B cell (primary cell): ENCODE measurements at regions of chr5 and their contacts with region 1.

Region 1: DNA sequence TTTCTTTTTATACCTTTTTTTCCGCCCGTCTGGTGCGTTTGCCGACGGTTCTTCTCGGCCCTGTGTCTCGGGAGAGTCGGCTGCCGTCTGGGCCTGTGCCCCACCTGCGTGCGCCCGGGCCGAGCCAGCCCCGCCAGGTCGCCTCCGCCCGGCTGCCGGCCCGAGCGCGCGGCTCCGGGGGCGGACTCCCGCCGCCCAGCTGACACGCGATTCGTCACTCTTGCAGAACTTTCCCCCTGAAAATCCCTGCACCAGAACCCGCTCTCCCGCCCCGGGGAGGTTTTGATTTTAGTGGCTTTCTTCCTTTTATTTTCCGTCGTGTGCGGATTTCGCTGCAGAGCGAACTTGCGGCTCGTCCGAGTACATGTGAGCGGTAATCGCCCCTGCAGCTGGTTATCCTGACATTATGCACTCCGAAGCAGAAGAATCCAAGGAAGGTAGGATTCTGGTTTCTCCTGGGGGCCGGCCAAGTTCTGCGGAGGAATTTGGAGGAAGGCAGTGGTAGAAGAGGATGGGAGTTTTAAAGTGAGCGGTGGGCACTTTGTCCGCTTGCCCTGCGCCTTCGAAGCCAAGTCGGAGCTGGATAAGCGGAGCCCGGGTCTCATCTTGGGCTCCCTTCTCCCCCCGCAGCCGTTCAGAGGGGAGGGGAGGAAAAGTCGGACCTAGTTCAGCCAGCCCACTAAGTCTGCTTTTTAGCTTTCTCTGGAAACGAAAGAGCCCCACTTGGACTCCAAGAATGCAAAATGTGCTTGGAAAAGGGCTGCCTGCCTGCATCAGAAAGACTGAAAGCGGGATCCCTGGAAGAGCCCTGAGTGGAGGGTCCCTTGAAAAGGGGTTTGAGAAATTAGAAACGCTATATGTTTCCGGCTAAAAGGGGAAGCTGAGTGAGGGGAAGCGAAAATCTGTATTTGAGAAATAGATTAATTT is at the start of gene TNFAIP8:
- DNase-seq: peak; percentile 74
- ATAC-seq: peak; percentile 66
- H3K4me3 ChIP-seq: peak within 1 kb of the TSS; percentile 76 to 93 (median 89)
- H3K4me3 Mint-ChIP-seq: peak within 1 kb of the TSS; percentile 92
- H3K27ac ChIP-seq: peak within 1 kb of the TSS; percentile 78 to 91
- H3K27ac Mint-ChIP-seq: peak within 1 kb of the TSS; percentile 93
- H3K4me1 ChIP-seq: peaks cover 73 to 74% of the 10 kb centered on the region in 2 donors
- H3K4me1 Mint-ChIP-seq: peaks cover 87% of the 10 kb centered on the region
- H3K27me3 ChIP-seq: no peaks in the 10 kb centered on the region
- H3K27me3 Mint-ChIP-seq: no peaks in the 10 kb centered on the region
- CTCF ChIP-seq: no peak
- total RNA-seq, gene TNFAIP8: 105 and 109 TPM in 2 replicates

Region 2: GRCh38 chr5:119200795-119201194 is 155.2 kb before region 1 on chr5:
- CTCF ChIA-PET with region 1: no interaction called
- POLR2A ChIA-PET with region 1: no interaction called
- intact Hi-C with region 1: no loop called
- DNase-seq: peak; percentile 12
- ATAC-seq: no peak
- H3K4me3 ChIP-seq: no peak overlapping the region
- H3K4me3 Mint-ChIP-seq: peak overlapping the region; percentile 42
- H3K27ac ChIP-seq: peak overlapping the region in 1 of 2 donors; percentile 13
- H3K27ac Mint-ChIP-seq: peak overlapping the region; percentile 86
- H3K4me1 ChIP-seq: peaks cover 12 to 16% of the 10 kb centered on the region in 2 donors
- H3K4me1 Mint-ChIP-seq: peaks cover 28% of the 10 kb centered on the region
- H3K27me3 ChIP-seq: no peaks in the 10 kb centered on the region
- H3K27me3 Mint-ChIP-seq: no peaks in the 10 kb centered on the region
- CTCF ChIP-seq: no peak

Region 3: DNA sequence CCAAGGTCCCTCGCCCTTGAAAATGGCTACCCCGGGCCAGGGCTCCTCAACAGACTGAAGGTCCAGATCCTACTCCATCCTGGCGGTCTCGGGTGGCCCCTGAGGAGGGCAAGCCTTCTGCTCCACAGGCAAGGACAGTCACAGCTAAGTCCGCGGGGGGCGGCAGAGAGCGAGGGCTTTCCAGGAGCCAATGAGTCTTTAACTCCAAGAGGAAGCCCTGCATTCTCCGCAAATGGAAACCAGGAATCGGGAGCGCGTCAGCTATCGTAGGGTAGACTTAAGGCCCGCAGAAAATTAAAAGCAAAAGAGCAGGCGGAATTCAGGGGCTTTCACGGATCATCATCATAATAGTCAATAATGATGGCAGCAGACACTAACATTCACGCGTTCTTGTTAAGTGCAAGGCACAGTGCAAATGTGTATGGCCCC is 88.0 kb before region 1 on chr5:
- CTCF ChIA-PET with region 1: interaction called, 7 read pairs
- POLR2A ChIA-PET with region 1: interaction called, 14 read pairs
- intact Hi-C with region 1: loop called (anchors 2 kb)
- DNase-seq: peak; percentile 94
- ATAC-seq: peak; percentile 63
- H3K4me3 ChIP-seq: peak overlapping the region; percentile 79 to 99 (median 96)
- H3K4me3 Mint-ChIP-seq: peak overlapping the region; percentile 98
- H3K27ac ChIP-seq: peak overlapping the region; percentile 83 to 91
- H3K27ac Mint-ChIP-seq: peak overlapping the region; percentile 95
- H3K4me1 ChIP-seq: peaks cover 39 to 40% of the 10 kb centered on the region in 2 donors
- H3K4me1 Mint-ChIP-seq: peaks cover 51% of the 10 kb centered on the region
- H3K27me3 ChIP-seq: no peaks in the 10 kb centered on the region
- H3K27me3 Mint-ChIP-seq: no peaks in the 10 kb centered on the region
- CTCF ChIP-seq: peak; percentile 38

Region 4: GRCh38 chr5:119340597-119341218 is 15.2 kb before region 1 on chr5:
- CTCF ChIA-PET with region 1: interaction called, 209 read pairs
- POLR2A ChIA-PET with region 1: interaction called, 14 read pairs
- intact Hi-C with region 1: loop called (anchors 1 kb)
- DNase-seq: peak; percentile 68
- ATAC-seq: peak; percentile 22
- H3K4me3 ChIP-seq: peak overlapping the region in 4 of 5 experiments; percentile 5 to 45 (median 22)
- H3K4me3 Mint-ChIP-seq: peak overlapping the region; percentile 85
- H3K27ac ChIP-seq: peak overlapping the region; percentile 87 to 91
- H3K27ac Mint-ChIP-seq: peak overlapping the region; percentile 95
- H3K4me1 ChIP-seq: peaks cover 95 to 96% of the 10 kb centered on the region in 2 donors
- H3K4me1 Mint-ChIP-seq: peaks cover 94% of the 10 kb centered on the region
- H3K27me3 ChIP-seq: no peaks in the 10 kb centered on the region
- H3K27me3 Mint-ChIP-seq: no peaks in the 10 kb centered on the region
- CTCF ChIP-seq: no peak

Region 5: GRCh38 chr5:119378075-119378700 is 22.2 kb after region 1 on chr5:
- CTCF ChIA-PET with region 1: interaction called, 10 read pairs
- POLR2A ChIA-PET with region 1: interaction called, 5 read pairs
- intact Hi-C with region 1: no loop called
- DNase-seq: no peak
- ATAC-seq: no peak
- H3K4me3 ChIP-seq: no peak overlapping the region
- H3K4me3 Mint-ChIP-seq: no peak overlapping the region
- H3K27ac ChIP-seq: peak overlapping the region in 1 of 2 donors; percentile 47
- H3K27ac Mint-ChIP-seq: peak overlapping the region; percentile 68
- H3K4me1 ChIP-seq: peaks cover 51% of the 10 kb centered on the region in 2 donors
- H3K4me1 Mint-ChIP-seq: peaks cover 74% of the 10 kb centered on the region
- H3K27me3 ChIP-seq: no peaks in the 10 kb centered on the region
- H3K27me3 Mint-ChIP-seq: no peaks in the 10 kb centered on the region
- CTCF ChIP-seq: no peak

Region 6: GRCh38 chr5:119405419-119405818 is 49.5 kb after region 1 on chr5:
- CTCF ChIA-PET with region 1: interaction called, 92 read pairs
- POLR2A ChIA-PET with region 1: interaction called, 8 read pairs
- intact Hi-C with region 1: loop called (anchors 2 kb)
- DNase-seq: no peak
- ATAC-seq: peak; percentile 28
- H3K4me3 ChIP-seq: peak overlapping the region in 1 of 5 experiments; percentile 4
- H3K4me3 Mint-ChIP-seq: peak overlapping the region; percentile 69
- H3K27ac ChIP-seq: peak overlapping the region; percentile 68 to 73
- H3K27ac Mint-ChIP-seq: peak overlapping the region; percentile 91
- H3K4me1 ChIP-seq: peaks cover 36 to 46% of the 10 kb centered on the region in 2 donors
- H3K4me1 Mint-ChIP-seq: peaks cover 75% of the 10 kb centered on the region
- H3K27me3 ChIP-seq: no peaks in the 10 kb centered on the region
- H3K27me3 Mint-ChIP-seq: no peaks in the 10 kb centered on the region
- CTCF ChIP-seq: no peak